ENCODE measurements at regions of chr4 and their contacts with region 1.

Region 1: DNA sequence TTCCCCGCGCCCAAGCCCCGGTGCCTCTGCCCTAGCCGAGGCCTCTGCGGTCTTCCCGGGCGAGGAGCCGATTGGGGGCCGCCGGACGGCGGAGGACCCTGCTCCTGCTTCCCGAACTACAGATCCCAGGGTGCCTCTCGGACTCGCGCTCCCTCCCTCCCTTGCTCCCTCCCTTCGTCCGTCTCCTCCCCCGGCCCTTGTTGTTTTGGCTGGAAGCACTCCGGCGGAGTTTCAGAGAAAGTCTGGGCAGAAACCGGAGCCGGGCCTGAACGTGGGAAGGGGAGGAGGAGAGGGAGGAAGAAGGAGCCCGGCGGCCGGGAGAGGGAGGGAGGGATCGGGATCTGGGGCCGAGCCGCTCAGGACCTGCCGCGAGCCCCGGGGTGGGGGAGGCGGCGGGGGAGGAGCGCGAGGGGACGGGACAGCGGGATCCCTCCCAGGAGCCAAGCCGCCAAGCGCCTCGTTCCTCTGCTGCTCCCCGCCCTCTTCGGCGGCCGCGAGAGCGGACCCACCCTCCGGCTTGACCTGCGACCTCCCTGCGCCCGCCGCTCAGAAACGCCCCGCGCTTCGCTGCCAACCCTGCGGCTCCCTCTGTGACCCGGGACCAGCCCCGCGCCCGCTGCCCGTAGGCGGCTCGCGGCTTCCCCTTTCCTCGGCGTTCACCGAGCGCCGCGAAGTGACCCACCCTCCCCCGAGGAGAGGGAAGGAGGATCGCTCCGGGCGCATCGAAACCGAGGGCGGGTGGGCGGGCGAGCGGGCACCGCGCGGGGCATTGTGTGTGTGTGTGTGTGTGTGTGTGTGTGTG is 496 bp upstream of the GAB1 start:
- DNase-seq: peak; percentile 69 to 90 (median 85)
- H3K4me3 ChIP-seq: peak overlapping the region; percentile 63 to 98 (median 91)
- H3K27ac ChIP-seq: peak overlapping the region in 45 of 59 donors; percentile 92 to 99 (median 98)
- H3K27me3 ChIP-seq: no peaks in the 10 kb centered on the region
- CTCF ChIP-seq: peak in 6 of 56 donors; percentile 5 to 30 (median 7)

Region 2: GRCh38 chr4:143184217-143185116 is 151.7 kb before region 1 on chr4 and contains the start of gene USP38:
- intact Hi-C with region 1: loop called in 1 of 2 experiments (anchors 10 kb)
- DNase-seq: peak; percentile 79 to 95 (median 91)
- H3K4me3 ChIP-seq: peak within 1 kb of the TSS; percentile 66 to 99 (median 91)
- H3K27ac ChIP-seq: peak within 1 kb of the TSS; percentile 57 to 96 (median 90)
- H3K27me3 ChIP-seq: no peaks in the 10 kb centered on the region
- CTCF ChIP-seq: peak in 32 of 56 donors; percentile 4 to 63 (median 29)
- total RNA-seq, gene USP38: 13.4 to 24.2 (median 17.7) TPM

Region 3: GRCh38 chr4:143375313-143376073 is 39.3 kb after region 1 on chr4:
- intact Hi-C with region 1: loop called (anchors 2 to 5 kb)
- DNase-seq: peak; percentile 11 to 86 (median 73)
- H3K4me3 ChIP-seq: peak overlapping the region in 24 of 59 donors; percentile 2 to 41 (median 23)
- H3K27ac ChIP-seq: peak overlapping the region in 58 of 59 donors; percentile 74 to 99 (median 92)
- H3K27me3 ChIP-seq: no peaks in the 10 kb centered on the region
- CTCF ChIP-seq: peak; percentile 15 to 79 (median 63)

Region 4: DNA sequence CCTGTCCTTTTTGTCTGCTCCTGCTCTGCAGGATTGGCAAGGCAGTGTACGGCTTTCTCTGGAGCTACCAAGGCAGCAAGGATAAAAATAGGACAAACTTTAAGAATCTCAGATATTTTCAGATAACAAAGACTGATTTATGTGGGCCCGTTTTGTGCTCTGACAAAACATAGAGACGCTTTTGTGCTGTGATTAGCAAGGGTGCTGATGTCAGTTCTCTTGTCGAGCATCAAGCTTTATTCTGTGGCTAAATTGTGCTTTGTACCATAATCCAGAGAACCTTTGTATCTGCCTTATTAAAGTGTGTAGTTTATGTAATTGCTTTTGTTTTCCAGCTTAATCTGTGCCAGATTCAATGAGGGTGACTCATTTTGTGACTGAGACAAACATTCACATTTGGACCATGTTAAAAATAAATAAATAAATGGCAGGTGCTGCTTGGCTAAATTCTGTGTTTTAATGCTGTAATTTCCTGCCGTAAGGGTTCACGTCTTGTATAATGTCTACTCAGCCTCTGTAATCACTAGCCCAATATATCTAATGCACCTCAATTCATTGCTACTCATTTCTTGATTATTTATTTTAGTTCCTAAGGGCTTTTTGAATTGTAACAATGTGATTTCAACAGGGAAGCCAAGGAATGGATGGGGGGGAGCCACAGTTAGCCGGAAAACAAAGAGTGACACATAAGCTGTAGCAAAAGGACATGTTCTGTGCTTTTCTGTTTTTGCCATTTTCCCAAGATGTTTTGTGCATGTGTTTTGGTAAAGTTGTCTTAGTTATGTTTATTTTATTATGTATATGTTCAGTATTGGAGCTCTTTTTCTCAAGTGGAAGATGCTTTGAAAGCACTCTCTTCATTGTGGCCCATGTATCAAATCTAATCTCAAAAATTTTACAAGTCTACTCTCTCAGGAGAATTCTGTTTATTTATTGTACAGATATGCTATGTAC is 75.6 kb after region 1 on chr4:
- intact Hi-C with region 1: loop called in 1 of 2 experiments (anchors 2 kb)
- DNase-seq: peak in 5 of 10 donors; percentile 19 to 71 (median 37)
- H3K4me3 ChIP-seq: peak overlapping the region in 38 of 59 donors; percentile 2 to 44 (median 18)
- H3K27ac ChIP-seq: peak overlapping the region; percentile 63 to 99 (median 97)
- H3K27me3 ChIP-seq: no peaks in the 10 kb centered on the region
- CTCF ChIP-seq: peak in 6 of 56 donors; percentile 0 to 16 (median 6)

Region 5: GRCh38 chr4:143513306-143514168 is 177.4 kb after region 1 on chr4 and contains the start of gene SMARCA5:
- intact Hi-C with region 1: loop called in 1 of 2 experiments (anchors 5 kb)
- DNase-seq: peak; percentile 89 to 96 (median 94)
- H3K4me3 ChIP-seq: peak within 1 kb of the TSS; percentile 62 to 96 (median 88)
- H3K27ac ChIP-seq: peak within 1 kb of the TSS; percentile 86 to 99 (median 96)
- H3K27me3 ChIP-seq: no peaks in the 10 kb centered on the region
- CTCF ChIP-seq: peak in 22 of 56 donors; percentile 2 to 49 (median 18)
- total RNA-seq, gene SMARCA5: 33.7 to 73.2 (median 51.5) TPM

Region 6: GRCh38 chr4:143616771-143617170 is 280.6 kb after region 1 on chr4:
- intact Hi-C with region 1: no loop called
- DNase-seq: no peak
- H3K4me3 ChIP-seq: no peak overlapping the region
- H3K27ac ChIP-seq: no peak overlapping the region
- H3K27me3 ChIP-seq: no peaks in the 10 kb centered on the region
- CTCF ChIP-seq: no peak